Stomach (tissue), 19 donors: ENCODE measurements at regions of chr13 and their contacts with region 1.

Region 1: GRCh38 chr13:44435142-44435982 is 61.7 kb downstream of the SERP2 start:
- DNase-seq: peak; percentile 97 to 99
- H3K4me3 ChIP-seq: peak overlapping the region; percentile 63 to 86 (median 69)
- H3K27ac ChIP-seq: peak overlapping the region; percentile 93 to 98 (median 96)
- H3K4me1 ChIP-seq: peaks cover 7 to 78% (median 44%) of the 10 kb centered on the region in 4 donors
- H3K27me3 ChIP-seq: no peaks in the 10 kb centered on the region
- CTCF ChIP-seq: no peak
- EP300 ChIP-seq: no peak
- POLR2A ChIP-seq: peak in 2 of 4 donors; percentile 20 to 84

Region 2: GRCh38 chr13:43915451-43915850 is 519.9 kb before region 1 on chr13:
- intact Hi-C with region 1: loop called (anchors 10 kb)
- DNase-seq: no peak
- H3K4me3 ChIP-seq: no peak overlapping the region
- H3K27ac ChIP-seq: no peak overlapping the region
- H3K4me1 ChIP-seq: no peaks in the 10 kb centered on the region
- H3K27me3 ChIP-seq: no peaks in the 10 kb centered on the region
- CTCF ChIP-seq: no peak
- EP300 ChIP-seq: no peak
- POLR2A ChIP-seq: no peak

Region 3: GRCh38 chr13:44050450-44051063 is 384.8 kb before region 1 on chr13:
- intact Hi-C with region 1: loop called (anchors 5 kb)
- DNase-seq: peak in 1 of 2 donors; percentile 71
- H3K4me3 ChIP-seq: no peak overlapping the region
- H3K27ac ChIP-seq: peak overlapping the region in 2 of 5 donors; percentile 2 to 37
- H3K4me1 ChIP-seq: peaks cover 4 to 38% (median 29%) of the 10 kb centered on the region in 4 donors
- H3K27me3 ChIP-seq: no peaks in the 10 kb centered on the region
- CTCF ChIP-seq: peak in 5 of 7 experiments; percentile 48 to 81 (median 75)
- EP300 ChIP-seq: no peak
- POLR2A ChIP-seq: no peak

Region 4: DNA sequence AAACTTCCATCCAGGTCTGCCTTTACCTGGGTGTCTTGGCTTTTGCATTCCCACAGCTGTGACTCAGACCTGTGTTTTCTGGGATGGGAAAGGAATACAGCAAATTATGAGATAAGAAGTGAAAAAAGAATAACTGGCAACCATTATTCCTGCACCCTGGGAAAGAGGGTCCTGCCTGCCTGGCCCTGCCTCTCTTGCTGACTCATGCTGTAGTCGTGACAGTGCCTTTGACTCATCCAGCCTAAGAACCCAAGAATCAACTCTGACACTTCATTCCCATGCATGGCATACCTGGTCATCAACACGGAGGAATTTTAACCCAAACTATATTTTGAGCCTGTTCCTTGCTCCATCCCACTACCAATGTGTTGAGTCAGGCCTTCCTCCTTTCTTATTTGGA is 247.1 kb before region 1 on chr13:
- intact Hi-C with region 1: no loop called
- DNase-seq: no peak
- H3K4me3 ChIP-seq: no peak overlapping the region
- H3K27ac ChIP-seq: no peak overlapping the region
- H3K4me1 ChIP-seq: peaks cover 0 to 19% (median 3%) of the 10 kb centered on the region in 4 donors
- H3K27me3 ChIP-seq: no peaks in the 10 kb centered on the region
- CTCF ChIP-seq: no peak
- EP300 ChIP-seq: no peak
- POLR2A ChIP-seq: no peak

Region 5: GRCh38 chr13:44249431-44249836 is 185.9 kb before region 1 on chr13:
- intact Hi-C with region 1: no loop called
- DNase-seq: peak in 1 of 2 donors; percentile 85
- H3K4me3 ChIP-seq: no peak overlapping the region
- H3K27ac ChIP-seq: peak overlapping the region in 4 of 5 donors; percentile 51 to 81 (median 66)
- H3K4me1 ChIP-seq: peaks cover 6 to 22% (median 15%) of the 10 kb centered on the region in 4 donors
- H3K27me3 ChIP-seq: no peaks in the 10 kb centered on the region
- CTCF ChIP-seq: no peak
- EP300 ChIP-seq: no peak
- POLR2A ChIP-seq: no peak

Region 6: GRCh38 chr13:44498969-44499368 is 63.6 kb after region 1 on chr13:
- intact Hi-C with region 1: no loop called
- DNase-seq: no peak
- H3K4me3 ChIP-seq: no peak overlapping the region
- H3K27ac ChIP-seq: no peak overlapping the region
- H3K4me1 ChIP-seq: no peaks in the 10 kb centered on the region
- H3K27me3 ChIP-seq: no peaks in the 10 kb centered on the region
- CTCF ChIP-seq: no peak
- EP300 ChIP-seq: no peak
- POLR2A ChIP-seq: no peak